Activated B cell treated with CpG ODN at 0.5 μM for 24 hours (primary cell): ENCODE measurements at regions of chr17 and their contacts with region 1.

Region 1: DNA sequence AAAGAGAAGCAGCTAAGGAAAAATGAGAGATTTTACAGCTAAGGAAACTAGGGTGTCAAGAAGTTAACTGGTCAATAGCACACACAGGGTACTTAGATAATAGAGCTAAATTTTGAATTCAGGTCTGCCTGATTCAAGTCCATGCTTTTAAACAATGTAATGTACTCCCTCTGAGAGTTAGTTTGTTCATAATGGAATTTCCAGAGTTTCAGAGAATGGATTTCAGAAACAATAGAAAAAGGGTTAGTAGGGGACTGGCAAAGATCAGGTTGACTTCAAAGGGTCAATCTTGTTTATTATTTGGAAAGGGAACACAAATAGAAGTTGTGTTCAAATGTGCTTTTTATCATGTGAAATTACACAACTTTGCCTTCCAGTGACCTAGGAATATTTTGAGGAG is 17.9 kb downstream of the NSRP1 start:
- DNase-seq: no peak
- ATAC-seq: no peak
- H3K4me3 Mint-ChIP-seq: no peak overlapping the region
- H3K27ac Mint-ChIP-seq: no peak overlapping the region
- H3K4me1 Mint-ChIP-seq: peaks cover 7% of the 10 kb centered on the region
- H3K27me3 Mint-ChIP-seq: no peaks in the 10 kb centered on the region
- CTCF ChIP-seq: no peak

Region 2: DNA sequence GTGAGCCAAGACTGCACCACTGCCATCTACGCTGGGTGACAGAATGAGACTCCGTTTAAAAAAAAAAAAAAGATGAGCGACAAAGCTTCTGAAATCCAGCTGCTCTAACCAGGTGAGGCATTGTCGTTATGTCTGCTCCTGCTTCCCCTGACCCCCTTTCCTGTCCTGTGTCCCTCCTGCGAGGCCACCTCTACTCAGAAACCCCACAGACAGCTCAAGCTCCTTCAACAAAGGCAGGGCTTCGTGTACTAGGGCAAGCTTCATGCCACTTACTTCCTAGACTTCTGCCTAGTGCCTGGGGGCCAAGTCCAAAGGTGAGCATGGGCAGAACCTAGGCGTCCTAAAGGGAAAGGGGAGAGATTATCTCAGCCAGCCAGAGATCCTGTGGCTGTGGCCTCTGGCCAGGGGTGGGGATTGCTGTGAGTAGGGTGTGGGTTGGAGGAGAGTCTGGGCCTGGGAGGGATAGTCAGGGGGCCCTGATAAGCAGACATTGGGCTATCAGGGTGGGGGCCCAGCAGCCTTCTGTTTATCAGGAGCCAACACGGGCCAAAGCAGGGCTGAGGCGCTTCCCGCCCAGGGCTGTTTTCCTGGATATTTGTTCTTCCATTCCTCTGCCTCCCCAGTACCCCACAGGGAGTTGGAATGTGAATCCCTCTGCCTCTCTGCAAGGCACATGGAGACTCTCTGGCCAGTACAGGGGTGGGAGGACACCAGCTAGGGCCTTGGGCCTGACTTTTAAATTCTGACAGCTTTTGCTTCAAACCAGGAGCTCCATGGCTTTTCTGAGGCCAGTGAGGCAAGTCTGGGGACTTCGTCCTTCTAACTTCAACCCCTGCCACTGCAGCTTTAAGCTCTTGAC is 1269.3 kb before region 1 on chr17:
- CTCF ChIA-PET with region 1: no interaction called
- POLR2A ChIA-PET with region 1: interaction called, 12 read pairs
- intact Hi-C with region 1: no loop called
- DNase-seq: no peak
- ATAC-seq: peak; percentile 30
- H3K4me3 Mint-ChIP-seq: no peak overlapping the region
- H3K27ac Mint-ChIP-seq: peak overlapping the region; percentile 76
- H3K4me1 Mint-ChIP-seq: peaks cover 14% of the 10 kb centered on the region
- H3K27me3 Mint-ChIP-seq: no peaks in the 10 kb centered on the region
- CTCF ChIP-seq: no peak

Region 3: DNA sequence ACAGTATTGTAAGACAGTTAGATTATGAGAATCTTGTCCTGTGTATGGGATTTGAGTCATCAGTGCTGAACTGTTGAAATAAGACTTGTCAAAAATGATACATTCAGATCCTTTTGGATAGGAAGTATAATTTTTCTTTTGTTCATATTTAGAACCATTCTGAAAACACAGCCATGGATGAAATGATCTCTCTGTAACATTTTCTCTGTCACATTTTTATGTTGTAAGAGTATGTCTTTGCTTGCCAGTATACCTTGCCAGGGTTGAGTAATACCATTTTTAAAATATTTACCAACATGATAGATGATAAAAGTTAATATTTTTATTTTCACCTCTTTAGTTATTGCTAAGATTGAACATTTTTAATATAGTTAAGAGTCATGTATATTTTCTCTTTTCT is 27.1 kb after region 1 on chr17:
- CTCF ChIA-PET with region 1: no interaction called
- POLR2A ChIA-PET with region 1: no interaction called
- intact Hi-C with region 1: no loop called
- DNase-seq: no peak
- ATAC-seq: no peak
- H3K4me3 Mint-ChIP-seq: no peak overlapping the region
- H3K27ac Mint-ChIP-seq: no peak overlapping the region
- H3K4me1 Mint-ChIP-seq: peaks cover 56% of the 10 kb centered on the region
- H3K27me3 Mint-ChIP-seq: no peaks in the 10 kb centered on the region
- CTCF ChIP-seq: no peak